WTC11 (cell line): ENCODE measurements at regions of chr18 and their contacts with region 1.

Region 1: DNA sequence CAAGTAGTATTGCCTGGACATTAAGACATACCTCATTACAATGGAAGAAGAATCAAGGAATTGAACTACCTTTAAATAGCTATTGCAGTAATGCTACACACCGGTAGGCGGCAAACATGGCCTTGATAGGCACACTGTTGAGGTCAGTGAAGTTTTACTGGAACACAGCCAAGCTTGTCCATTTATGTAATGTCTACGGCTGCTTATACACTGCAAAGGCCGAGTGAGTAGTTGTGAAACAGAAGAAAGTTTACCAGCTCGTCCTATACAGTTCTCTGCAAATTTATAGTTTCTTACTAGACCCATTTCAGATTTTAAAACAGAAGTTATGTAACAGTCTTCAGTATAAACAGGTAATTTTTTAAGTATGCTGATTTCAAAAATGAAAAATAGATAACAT is 38.8 kb downstream of the PPP4R1 start:
- DNase-seq: peak; percentile 65
- ATAC-seq: peak; percentile 75
- H3K4me3 Mint-ChIP-seq: peak overlapping the region; percentile 10; the same call in 1 of the 2 replicates
- H3K27ac Mint-ChIP-seq: no peak overlapping the region
- H3K4me1 Mint-ChIP-seq: peaks cover 23% of the 10 kb centered on the region
- H3K27me3 Mint-ChIP-seq: no peaks in the 10 kb centered on the region
- CTCF ChIP-seq: peak; percentile 76

Region 2: GRCh38 chr18:9565407-9565806 is 10.2 kb before region 1 on chr18:
- CTCF ChIA-PET with region 1: interaction called, 10 read pairs
- POLR2A ChIA-PET with region 1: no interaction called
- DNase-seq: no peak
- ATAC-seq: no peak
- H3K4me3 Mint-ChIP-seq: no peak overlapping the region
- H3K27ac Mint-ChIP-seq: no peak overlapping the region
- H3K4me1 Mint-ChIP-seq: no peaks in the 10 kb centered on the region
- H3K27me3 Mint-ChIP-seq: no peaks in the 10 kb centered on the region
- CTCF ChIP-seq: no peak

Region 3: DNA sequence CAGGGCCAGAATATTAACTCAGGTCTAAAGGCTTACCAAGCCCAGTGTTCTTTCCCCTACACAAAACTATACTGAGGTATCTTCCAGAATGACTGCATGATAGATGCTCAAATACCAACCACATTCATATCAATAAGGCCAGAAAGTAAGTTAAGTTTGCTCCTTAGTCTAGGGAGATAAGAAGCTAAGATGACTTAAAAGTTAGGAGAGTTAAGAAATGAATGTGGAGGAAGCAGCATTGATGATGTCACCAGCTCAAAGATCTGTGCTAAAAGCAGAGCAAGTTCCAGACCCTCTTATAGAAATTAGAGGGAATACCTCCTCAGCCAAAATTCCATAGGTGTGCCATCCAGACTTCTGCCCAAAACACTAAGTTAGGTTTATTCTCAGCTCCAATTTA is 32.7 kb after region 1 on chr18:
- CTCF ChIA-PET with region 1: interaction called, 11 read pairs
- POLR2A ChIA-PET with region 1: no interaction called
- DNase-seq: no peak
- ATAC-seq: no peak
- H3K4me3 Mint-ChIP-seq: no peak overlapping the region
- H3K27ac Mint-ChIP-seq: peak overlapping the region; percentile 76; the same call in 1 of the 2 replicates
- H3K4me1 Mint-ChIP-seq: peaks cover 32% of the 10 kb centered on the region
- H3K27me3 Mint-ChIP-seq: no peaks in the 10 kb centered on the region
- CTCF ChIP-seq: no peak

Region 4: GRCh38 chr18:9661564-9661963 is 86.0 kb after region 1 on chr18:
- CTCF ChIA-PET with region 1: interaction called, 33 read pairs
- POLR2A ChIA-PET with region 1: no interaction called
- DNase-seq: no peak
- ATAC-seq: peak; percentile 46
- H3K4me3 Mint-ChIP-seq: no peak overlapping the region
- H3K27ac Mint-ChIP-seq: no peak overlapping the region
- H3K4me1 Mint-ChIP-seq: no peaks in the 10 kb centered on the region
- H3K27me3 Mint-ChIP-seq: no peaks in the 10 kb centered on the region; the same call in 1 of the 2 replicates
- CTCF ChIP-seq: no peak

Region 5: DNA sequence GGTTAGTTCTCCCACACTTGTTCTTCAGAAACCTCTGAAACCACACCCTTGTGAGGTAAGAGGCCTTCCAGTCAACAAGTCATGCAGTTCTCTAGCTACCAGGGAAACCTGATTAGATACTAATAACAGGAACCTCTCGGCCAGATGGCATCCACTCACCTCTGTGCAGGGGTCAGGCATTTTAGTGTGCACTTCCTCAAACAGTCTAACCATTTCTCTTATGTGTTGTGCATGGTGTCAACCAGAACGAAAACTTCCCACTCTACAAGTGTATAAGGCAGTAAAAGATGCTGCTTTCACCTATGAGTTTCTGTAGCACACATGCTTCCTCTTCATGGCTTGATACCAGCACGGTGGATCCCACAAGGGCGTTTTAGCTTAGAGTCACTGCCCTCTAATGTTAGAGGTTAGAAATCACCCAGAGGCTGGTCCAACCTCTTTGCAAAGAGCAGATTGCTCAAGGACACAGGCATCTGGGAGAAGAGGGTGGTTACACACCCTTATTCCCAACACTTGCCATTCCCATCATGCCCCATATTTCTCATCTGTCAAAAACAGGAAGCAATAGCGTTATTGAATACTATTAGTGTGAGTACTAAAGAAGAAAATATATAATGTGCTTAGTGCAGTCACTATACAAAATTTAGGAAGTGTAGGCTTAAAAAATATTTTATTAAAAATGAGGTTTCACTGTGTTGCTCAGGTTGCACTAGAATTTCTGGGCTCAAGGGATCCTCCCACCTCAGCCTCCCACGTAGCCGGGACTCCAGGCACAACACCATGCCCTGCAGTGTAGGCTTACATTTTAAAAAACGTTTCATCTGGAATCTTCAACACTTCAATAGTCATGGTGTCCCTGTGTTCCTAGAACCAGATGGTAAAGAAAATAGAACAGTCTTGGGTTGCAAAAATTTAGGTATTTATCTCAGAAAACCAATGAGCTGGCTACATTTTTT is 98.0 kb after region 1 on chr18:
- CTCF ChIA-PET with region 1: interaction called, 12 read pairs
- POLR2A ChIA-PET with region 1: no interaction called
- DNase-seq: no peak
- ATAC-seq: peak; percentile 84
- H3K4me3 Mint-ChIP-seq: no peak overlapping the region
- H3K27ac Mint-ChIP-seq: peak overlapping the region; percentile 72; the same call in 1 of the 2 replicates
- H3K4me1 Mint-ChIP-seq: no peaks in the 10 kb centered on the region
- H3K27me3 Mint-ChIP-seq: no peaks in the 10 kb centered on the region
- CTCF ChIP-seq: no peak

Region 6: GRCh38 chr18:9722691-9723090 is 147.1 kb after region 1 on chr18:
- CTCF ChIA-PET with region 1: interaction called, 16 read pairs
- POLR2A ChIA-PET with region 1: no interaction called
- DNase-seq: peak; percentile 39
- ATAC-seq: peak; percentile 84
- H3K4me3 Mint-ChIP-seq: no peak overlapping the region
- H3K27ac Mint-ChIP-seq: no peak overlapping the region
- H3K4me1 Mint-ChIP-seq: peaks cover 26% of the 10 kb centered on the region
- H3K27me3 Mint-ChIP-seq: no peaks in the 10 kb centered on the region
- CTCF ChIP-seq: no peak